AG04450 (cell line): ENCODE measurements at regions of chr11 and their contacts with region 1.

Region 1: DNA sequence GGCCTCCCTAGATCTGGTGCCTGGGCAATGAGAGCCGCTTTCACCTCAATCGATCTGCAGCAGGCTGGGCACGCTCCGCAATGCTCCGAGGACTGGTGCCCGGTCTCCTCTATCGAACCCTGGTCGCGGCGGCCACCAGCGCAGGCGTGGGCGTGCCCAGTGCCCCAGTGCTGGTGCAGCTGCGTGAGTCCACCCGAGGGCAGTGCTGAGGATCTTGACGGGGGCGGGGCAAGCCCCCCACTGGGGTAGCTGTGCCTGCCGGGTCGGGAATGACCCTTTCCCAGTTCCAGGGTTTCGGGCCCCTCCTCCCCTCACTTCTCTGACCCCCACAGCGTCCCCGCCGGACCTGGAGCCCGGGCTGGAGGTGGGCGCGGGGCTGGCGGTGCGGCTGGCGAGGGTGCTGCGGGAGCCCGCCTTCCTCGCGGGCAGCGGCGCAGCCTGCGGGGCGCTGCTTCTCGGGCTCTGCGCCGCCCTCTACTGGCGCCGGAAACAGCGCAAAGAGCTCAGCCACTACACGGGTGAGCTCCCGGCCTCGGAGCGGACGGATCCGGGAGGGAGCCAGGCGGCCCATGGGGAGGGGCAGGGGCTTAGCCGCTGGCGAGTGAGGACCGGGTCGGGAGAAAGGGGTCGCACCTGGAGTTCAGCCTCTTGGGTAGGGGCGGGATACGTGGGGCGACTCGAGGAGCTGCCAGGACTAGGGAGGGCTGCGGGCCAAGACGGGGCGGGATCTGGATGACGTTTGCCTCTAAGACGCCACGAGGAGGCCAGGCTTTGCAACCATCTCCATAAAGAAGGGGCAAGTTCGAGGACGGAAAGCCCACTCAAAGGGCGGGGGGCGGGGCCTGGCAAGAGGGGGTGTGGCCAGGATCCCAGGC is 10.9 kb downstream of the ROBO3 start:
- DNase-seq: peak; percentile 94
- H3K4me3 ChIP-seq: peak overlapping the region; percentile 73
- H3K27ac ChIP-seq: peak overlapping the region; percentile 97
- H3K27me3 ChIP-seq: peaks cover 21% of the 10 kb centered on the region
- CTCF ChIP-seq: peak; percentile 65

Region 2: GRCh38 chr11:124812876-124813275 is 63.3 kb before region 1 on chr11:
- CTCF ChIA-PET with region 1: interaction called, 13 read pairs
- POLR2A ChIA-PET with region 1: no interaction called
- DNase-seq: no peak
- H3K4me3 ChIP-seq: no peak overlapping the region
- H3K27ac ChIP-seq: no peak overlapping the region
- H3K27me3 ChIP-seq: peaks cover 6% of the 10 kb centered on the region
- CTCF ChIP-seq: no peak

Region 3: GRCh38 chr11:124891373-124891861 is 15.2 kb after region 1 on chr11:
- CTCF ChIA-PET with region 1: interaction called, 35 read pairs
- POLR2A ChIA-PET with region 1: interaction called, 3 read pairs
- DNase-seq: no peak
- H3K4me3 ChIP-seq: no peak overlapping the region
- H3K27ac ChIP-seq: no peak overlapping the region
- H3K27me3 ChIP-seq: no peaks in the 10 kb centered on the region
- CTCF ChIP-seq: no peak

Region 4: DNA sequence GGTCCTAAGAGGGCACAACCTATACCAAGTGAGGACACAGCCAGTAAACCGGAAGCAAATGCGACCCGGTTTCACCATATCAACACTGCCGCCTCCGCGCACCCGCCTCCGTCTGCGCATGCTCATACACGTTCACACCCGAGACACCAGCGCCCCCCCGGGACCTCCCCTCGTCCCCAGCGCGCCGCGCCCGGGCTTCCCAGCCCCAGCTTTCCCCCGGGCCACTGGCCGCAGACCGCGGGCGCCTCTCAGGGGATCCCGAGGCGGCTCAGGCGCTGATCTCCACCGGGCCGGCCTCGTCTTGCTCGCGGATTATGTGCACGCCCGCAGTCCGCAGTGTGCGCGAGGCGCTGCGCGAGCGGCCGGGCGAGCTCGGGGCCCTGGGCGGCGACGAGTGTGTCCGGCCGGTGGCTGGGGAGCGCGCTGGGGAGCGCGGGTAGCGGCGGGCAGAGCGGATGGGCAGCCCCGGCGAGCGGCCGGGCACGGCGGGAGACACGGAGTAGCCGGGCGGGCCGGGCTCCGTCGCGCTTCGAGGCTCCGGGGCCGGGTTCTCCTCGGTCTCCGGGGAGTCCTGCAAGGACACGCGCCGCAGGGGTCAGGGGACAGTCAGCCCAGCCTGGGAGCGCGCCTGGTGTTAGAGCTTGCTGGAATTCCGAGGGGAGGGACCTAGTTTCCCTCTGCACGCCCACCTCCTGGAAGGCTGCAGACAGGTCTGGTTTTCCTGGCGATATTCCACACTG is 44.9 kb after region 1 on chr11:
- CTCF ChIA-PET with region 1: interaction called, 16 read pairs
- POLR2A ChIA-PET with region 1: interaction called, 14 read pairs
- DNase-seq: no peak
- H3K4me3 ChIP-seq: peak overlapping the region; percentile 48
- H3K27ac ChIP-seq: peak overlapping the region; percentile 39
- H3K27me3 ChIP-seq: no peaks in the 10 kb centered on the region
- CTCF ChIP-seq: no peak

Region 5: DNA sequence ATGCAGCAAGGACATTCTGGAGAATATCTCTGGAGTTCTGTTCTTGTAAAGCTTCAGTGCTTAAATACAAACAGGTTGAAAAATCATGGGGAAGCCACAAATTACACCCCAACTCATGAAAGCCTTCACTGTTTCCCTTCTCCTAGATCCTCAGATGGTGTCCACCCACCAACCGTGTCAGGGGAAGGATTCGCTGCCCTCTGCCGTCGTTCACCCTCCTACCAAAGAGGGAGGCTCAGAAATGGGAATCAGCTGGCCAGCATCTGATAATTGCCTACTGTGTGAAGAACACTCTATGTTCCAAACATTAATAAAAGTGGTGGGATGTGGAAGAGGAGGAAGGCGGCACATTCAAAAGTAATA is 67.1 kb after region 1 on chr11:
- CTCF ChIA-PET with region 1: interaction called, 19 read pairs
- POLR2A ChIA-PET with region 1: interaction called, 5 read pairs
- DNase-seq: no peak
- H3K4me3 ChIP-seq: no peak overlapping the region
- H3K27ac ChIP-seq: no peak overlapping the region
- H3K27me3 ChIP-seq: no peaks in the 10 kb centered on the region
- CTCF ChIP-seq: no peak

Region 6: GRCh38 chr11:125055107-125055715 is 179.0 kb after region 1 on chr11:
- CTCF ChIA-PET with region 1: no interaction called
- POLR2A ChIA-PET with region 1: no interaction called
- DNase-seq: no peak
- H3K4me3 ChIP-seq: no peak overlapping the region
- H3K27ac ChIP-seq: no peak overlapping the region
- H3K27me3 ChIP-seq: no peaks in the 10 kb centered on the region
- CTCF ChIP-seq: no peak